K562 (cell line): ENCODE measurements at regions of chr1 and their contacts with region 1.

Region 1: GRCh38 chr1:17439250-17440073 is at the start of gene RCC2:
- DNase-seq: peak; percentile 87 to 92 (median 92)
- ATAC-seq: peak; percentile 80
- H3K4me3 ChIP-seq: peak within 1 kb of the TSS; percentile 97
- H3K27ac ChIP-seq: peak within 1 kb of the TSS; percentile 92
- H3K4me1 ChIP-seq: peaks cover 24 to 37% of the 10 kb centered on the region in 2 experiments; a peak in 4 of 5 replicates
- H3K27me3 ChIP-seq: no peaks in the 10 kb centered on the region; a peak in 1 of 5 replicates
- CTCF ChIP-seq: peak in 2 of 3 experiments; percentile 34 to 37; a peak in 4 of 6 replicates
- EP300 ChIP-seq: no peak
- POLR2A ChIP-seq: peak; percentile 88
- RAD21 ChIP-seq: no peak
- polyA plus RNA-seq, gene RCC2: 31.8 to 203 TPM

Region 2: GRCh38 chr1:17287130-17287776 is 152.2 kb before region 1 on chr1:
- CTCF ChIA-PET with region 1: no interaction called
- POLR2A ChIA-PET with region 1: no interaction called
- in situ Hi-C with region 1: no loop called
- intact Hi-C with region 1: no loop called
- DNase-seq: no peak
- ATAC-seq: no peak
- H3K4me3 ChIP-seq: no peak overlapping the region
- H3K27ac ChIP-seq: no peak overlapping the region
- H3K4me1 ChIP-seq: peaks cover 2 to 3% of the 10 kb centered on the region in 2 experiments; a peak in 3 of 5 replicates
- H3K27me3 ChIP-seq: peaks cover 31 to 58% of the 10 kb centered on the region in 2 experiments
- CTCF ChIP-seq: no peak
- EP300 ChIP-seq: no peak
- POLR2A ChIP-seq: no peak
- RAD21 ChIP-seq: no peak

Region 3: DNA sequence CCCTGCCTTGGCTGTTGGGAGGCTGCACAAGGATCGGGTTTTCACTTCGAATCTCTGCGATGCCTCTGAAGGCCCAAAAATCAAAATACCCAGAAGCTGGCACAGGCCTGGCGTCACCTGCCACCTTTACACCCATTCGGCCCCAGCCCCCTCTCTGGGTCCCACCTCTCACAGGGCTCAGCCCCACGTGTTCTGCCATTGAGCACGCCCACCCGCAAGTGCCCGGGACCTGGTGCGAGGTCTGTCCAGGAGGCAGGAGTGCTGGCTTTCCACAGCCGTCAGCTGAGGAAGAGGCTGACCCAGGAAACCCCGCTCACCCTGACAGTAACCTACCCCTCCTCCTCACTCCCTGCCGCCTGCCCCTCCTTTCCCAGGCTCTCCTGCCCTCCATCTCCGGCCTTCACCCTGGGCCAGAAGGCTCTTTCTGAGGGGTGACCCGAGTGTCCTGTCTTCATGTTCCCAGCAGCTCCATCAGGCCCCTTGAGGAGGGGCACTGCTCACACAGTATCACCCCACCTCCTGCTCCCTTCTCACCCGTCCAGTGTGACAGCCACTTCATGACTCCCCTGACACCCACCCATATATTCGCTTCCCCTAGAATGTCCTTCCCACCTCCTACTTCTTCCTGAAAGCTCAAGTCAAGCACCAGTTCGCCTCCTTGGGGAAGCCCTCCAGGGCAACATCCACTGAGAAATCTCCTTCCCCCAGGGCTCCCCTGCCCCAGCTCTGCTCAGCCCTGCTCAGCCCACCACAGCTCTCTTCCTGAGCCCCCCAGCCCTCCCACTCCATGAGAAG is 13.5 kb before region 1 on chr1:
- CTCF ChIA-PET with region 1: no interaction called
- POLR2A ChIA-PET with region 1: interaction called, 13 read pairs
- in situ Hi-C with region 1: no loop called
- intact Hi-C with region 1: no loop called
- DNase-seq: no peak
- ATAC-seq: peak; percentile 8; the same call in 2 of the 3 replicates
- H3K4me3 ChIP-seq: no peak overlapping the region
- H3K27ac ChIP-seq: no peak overlapping the region
- H3K4me1 ChIP-seq: peaks cover 0 to 6% of the 10 kb centered on the region in 2 experiments; a peak in 2 of 5 replicates
- H3K27me3 ChIP-seq: no peaks in the 10 kb centered on the region
- CTCF ChIP-seq: no peak
- EP300 ChIP-seq: no peak
- POLR2A ChIP-seq: 0 out of 2 replicates have a peak, but pooled peaks have one; percentile 24
- RAD21 ChIP-seq: no peak

Region 4: DNA sequence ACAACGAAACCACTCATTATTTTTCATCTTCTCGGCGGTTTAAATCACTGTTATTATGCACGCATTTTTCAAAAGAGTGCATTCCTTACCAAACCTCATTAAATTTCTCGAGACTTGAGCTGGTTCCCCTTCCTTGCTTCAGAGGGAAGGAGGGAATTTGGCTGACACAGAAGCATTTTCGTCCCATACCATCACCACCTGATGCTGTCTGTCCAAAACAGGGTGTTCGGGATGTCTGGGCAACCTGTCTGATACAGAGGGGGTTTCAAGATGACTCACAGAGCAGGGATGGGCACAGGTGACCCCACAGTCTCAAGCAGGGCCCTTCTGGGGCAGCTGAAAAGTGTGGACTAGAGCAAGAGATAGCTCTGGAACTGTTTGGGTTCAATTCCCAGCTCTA is 12.3 kb after region 1 on chr1:
- CTCF ChIA-PET with region 1: no interaction called
- POLR2A ChIA-PET with region 1: interaction called, 14 read pairs
- in situ Hi-C with region 1: no loop called
- intact Hi-C with region 1: no loop called
- DNase-seq: no peak
- ATAC-seq: peak; percentile 16
- H3K4me3 ChIP-seq: no peak overlapping the region
- H3K27ac ChIP-seq: no peak overlapping the region
- H3K4me1 ChIP-seq: no peaks in the 10 kb centered on the region; a peak in 1 of 5 replicates
- H3K27me3 ChIP-seq: peaks cover 0 to 2% of the 10 kb centered on the region in 2 experiments; a peak in 1 of 5 replicates
- CTCF ChIP-seq: no peak
- EP300 ChIP-seq: no peak
- POLR2A ChIP-seq: no peak
- RAD21 ChIP-seq: no peak

Region 5: GRCh38 chr1:17485280-17485679 is 45.8 kb after region 1 on chr1:
- CTCF ChIA-PET with region 1: no interaction called
- POLR2A ChIA-PET with region 1: interaction called, 3 read pairs
- in situ Hi-C with region 1: no loop called
- intact Hi-C with region 1: loop called (anchors 5 kb)
- DNase-seq: peak in 3 of 4 experiments; percentile 37 to 61 (median 51)
- ATAC-seq: peak; percentile 48
- H3K4me3 ChIP-seq: no peak overlapping the region
- H3K27ac ChIP-seq: no peak overlapping the region
- H3K4me1 ChIP-seq: peaks cover 20 to 23% of the 10 kb centered on the region in 2 experiments; a peak in 4 of 5 replicates
- H3K27me3 ChIP-seq: no peaks in the 10 kb centered on the region; a peak in 1 of 5 replicates
- CTCF ChIP-seq: peak; percentile 66 to 76 (median 73)
- EP300 ChIP-seq: no peak
- POLR2A ChIP-seq: no peak
- RAD21 ChIP-seq: peak; percentile 26 to 61